ENCODE measurements at regions of chr18 and their contacts with region 1.

Region 1: GRCh38 chr18:74963820-74964446 is 245.0 kb downstream of the PTGR3 start:
- H3K4me3 ChIP-seq: no peak overlapping the region
- H3K27ac ChIP-seq: no peak overlapping the region
- H3K4me1 ChIP-seq: no peaks in the 10 kb centered on the region
- CTCF ChIP-seq: no peak

Region 2: GRCh38 chr18:74652392-74652988 is 311.4 kb before region 1 on chr18:
- CTCF ChIA-PET with region 1: interaction called, 13 read pairs
- POLR2A ChIA-PET with region 1: no interaction called
- H3K4me3 ChIP-seq: no peak overlapping the region
- H3K27ac ChIP-seq: no peak overlapping the region
- H3K4me1 ChIP-seq: no peaks in the 10 kb centered on the region
- CTCF ChIP-seq: no peak

Measured in HEK293 (cell line).